OCI-LY7 (cell line): ENCODE measurements at regions of chr1 and their contacts with region 1.

Region 1: DNA sequence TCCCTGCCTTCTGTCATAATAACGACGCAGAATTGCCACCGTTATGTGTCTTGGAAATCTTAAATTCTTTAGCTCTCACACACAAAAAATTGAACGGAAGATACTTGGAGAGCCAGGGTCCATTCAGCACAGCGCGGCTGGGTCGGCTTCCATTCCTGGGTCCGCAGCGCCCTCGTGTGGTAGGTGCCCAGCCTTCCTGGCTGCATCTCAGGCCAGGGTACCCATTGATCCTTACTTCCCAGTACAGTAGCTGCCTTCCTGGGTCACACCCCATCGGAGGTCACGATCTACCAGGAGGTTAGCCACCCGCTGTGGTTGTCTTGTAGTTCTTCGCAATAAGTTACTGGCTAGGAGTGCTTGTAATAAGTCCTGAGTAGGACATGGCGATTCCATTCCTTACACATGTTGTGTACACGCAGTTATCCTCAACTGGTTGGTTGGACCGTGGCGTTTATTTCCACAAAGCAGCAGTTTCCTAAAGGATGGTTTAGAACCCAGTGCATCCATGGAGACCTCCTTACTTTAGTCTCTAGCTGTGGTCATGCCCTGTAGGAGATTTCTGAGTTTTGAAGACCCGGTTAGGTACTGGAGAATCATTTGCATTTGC is 9.9 kb upstream of the MTARC1 start:
- DNase-seq: peak; percentile 21
- H3K4me3 ChIP-seq: no peak overlapping the region
- H3K27ac ChIP-seq: no peak overlapping the region
- H3K4me1 ChIP-seq: no peaks in the 10 kb centered on the region
- CTCF ChIP-seq: peak; percentile 84

Region 2: GRCh38 chr1:219837274-219837993 is 939.4 kb before region 1 on chr1:
- CTCF ChIA-PET with region 1: no interaction called
- POLR2A ChIA-PET with region 1: no interaction called
- intact Hi-C with region 1: loop called (anchors 10 kb)
- DNase-seq: peak; percentile 38
- H3K4me3 ChIP-seq: no peak overlapping the region
- H3K27ac ChIP-seq: no peak overlapping the region
- H3K4me1 ChIP-seq: no peaks in the 10 kb centered on the region
- CTCF ChIP-seq: peak; percentile 81

Region 3: GRCh38 chr1:220595184-220595583 is 181.6 kb before region 1 on chr1:
- CTCF ChIA-PET with region 1: no interaction called
- POLR2A ChIA-PET with region 1: no interaction called
- intact Hi-C with region 1: no loop called
- DNase-seq: no peak
- H3K4me3 ChIP-seq: no peak overlapping the region
- H3K27ac ChIP-seq: no peak overlapping the region
- H3K4me1 ChIP-seq: no peaks in the 10 kb centered on the region
- CTCF ChIP-seq: no peak

Region 4: DNA sequence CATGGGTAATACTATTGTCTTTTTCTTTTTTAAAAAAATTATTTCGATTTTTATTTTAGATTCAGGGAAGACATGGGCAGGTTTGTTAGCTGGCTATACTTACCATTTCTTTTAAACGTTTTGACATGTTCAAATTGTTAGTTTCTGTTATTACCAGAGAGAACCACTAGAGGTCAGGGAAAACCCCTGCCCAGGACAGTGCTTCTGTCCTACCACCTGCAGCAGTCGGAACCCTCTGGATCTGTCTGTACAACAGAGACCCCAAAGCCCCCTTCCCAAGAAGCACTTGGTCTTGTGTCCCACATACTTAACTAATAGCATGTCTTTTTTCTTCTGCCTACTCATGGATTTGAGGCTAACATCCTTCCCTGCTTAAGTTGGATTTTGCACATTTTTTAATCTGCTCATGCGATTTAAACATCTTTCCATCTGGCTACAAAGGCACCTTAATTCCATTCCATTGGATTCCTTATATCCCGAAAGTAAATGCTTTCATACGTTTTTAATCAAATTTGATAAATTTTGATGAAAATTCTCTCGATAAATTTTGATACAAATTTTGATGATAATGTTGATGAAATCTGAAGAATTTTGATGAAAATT is 96.6 kb before region 1 on chr1:
- CTCF ChIA-PET with region 1: no interaction called
- POLR2A ChIA-PET with region 1: no interaction called
- intact Hi-C with region 1: loop called (anchors 5 kb)
- DNase-seq: peak; percentile 16
- H3K4me3 ChIP-seq: no peak overlapping the region
- H3K27ac ChIP-seq: no peak overlapping the region
- H3K4me1 ChIP-seq: no peaks in the 10 kb centered on the region
- CTCF ChIP-seq: peak; percentile 76

Region 5: GRCh38 chr1:220764757-220765156 is 12.1 kb before region 1 on chr1:
- CTCF ChIA-PET with region 1: no interaction called
- POLR2A ChIA-PET with region 1: no interaction called
- intact Hi-C with region 1: no loop called
- DNase-seq: no peak
- H3K4me3 ChIP-seq: no peak overlapping the region
- H3K27ac ChIP-seq: no peak overlapping the region
- H3K4me1 ChIP-seq: no peaks in the 10 kb centered on the region
- CTCF ChIP-seq: no peak

Region 6: DNA sequence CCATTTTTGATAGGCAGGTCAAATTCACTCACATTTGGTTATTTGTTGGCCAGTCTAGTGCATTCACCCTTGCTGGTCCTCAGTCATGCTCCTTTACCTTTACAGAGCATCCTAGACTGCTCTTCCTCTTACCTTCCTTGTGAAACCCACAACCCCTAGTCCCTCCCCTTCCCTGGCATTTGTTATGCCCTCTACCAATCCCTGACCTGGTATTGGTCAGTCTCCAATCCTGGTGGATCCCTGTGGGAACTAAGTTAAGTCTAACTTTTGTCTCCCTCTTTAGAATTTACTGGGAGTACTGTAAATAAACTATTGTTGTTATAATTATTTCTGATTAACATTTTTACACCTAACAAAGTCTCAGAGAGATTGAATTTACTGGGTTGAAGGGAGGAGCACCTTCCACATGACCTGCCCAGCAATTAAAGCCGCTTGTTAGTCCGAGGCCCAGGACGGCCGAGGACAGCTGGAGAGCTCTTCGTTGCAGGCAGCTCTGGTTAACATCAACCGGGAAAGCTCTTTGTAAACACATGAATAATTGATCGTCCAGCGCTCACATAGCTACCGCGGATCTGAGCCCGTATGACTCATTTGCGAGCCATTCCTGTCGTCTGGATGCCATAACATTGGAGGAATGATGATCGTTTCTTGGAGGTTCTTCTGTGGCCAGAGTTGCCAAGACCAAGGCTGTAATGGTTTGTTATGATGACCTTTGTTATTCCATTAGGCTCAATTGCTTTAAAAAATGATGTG is 41.8 kb after region 1 on chr1:
- CTCF ChIA-PET with region 1: no interaction called
- POLR2A ChIA-PET with region 1: no interaction called
- intact Hi-C with region 1: no loop called
- DNase-seq: no peak
- H3K4me3 ChIP-seq: no peak overlapping the region
- H3K27ac ChIP-seq: no peak overlapping the region
- H3K4me1 ChIP-seq: no peaks in the 10 kb centered on the region
- CTCF ChIP-seq: no peak

Region 7: GRCh38 chr1:220999872-221000863 is 223.3 kb after region 1 on chr1:
- CTCF ChIA-PET with region 1: no interaction called
- POLR2A ChIA-PET with region 1: no interaction called
- intact Hi-C with region 1: no loop called
- DNase-seq: no peak
- H3K4me3 ChIP-seq: no peak overlapping the region
- H3K27ac ChIP-seq: no peak overlapping the region
- H3K4me1 ChIP-seq: no peaks in the 10 kb centered on the region
- CTCF ChIP-seq: no peak